ENCODE measurements at regions of chr17 and their contacts with region 1.

Region 1: DNA sequence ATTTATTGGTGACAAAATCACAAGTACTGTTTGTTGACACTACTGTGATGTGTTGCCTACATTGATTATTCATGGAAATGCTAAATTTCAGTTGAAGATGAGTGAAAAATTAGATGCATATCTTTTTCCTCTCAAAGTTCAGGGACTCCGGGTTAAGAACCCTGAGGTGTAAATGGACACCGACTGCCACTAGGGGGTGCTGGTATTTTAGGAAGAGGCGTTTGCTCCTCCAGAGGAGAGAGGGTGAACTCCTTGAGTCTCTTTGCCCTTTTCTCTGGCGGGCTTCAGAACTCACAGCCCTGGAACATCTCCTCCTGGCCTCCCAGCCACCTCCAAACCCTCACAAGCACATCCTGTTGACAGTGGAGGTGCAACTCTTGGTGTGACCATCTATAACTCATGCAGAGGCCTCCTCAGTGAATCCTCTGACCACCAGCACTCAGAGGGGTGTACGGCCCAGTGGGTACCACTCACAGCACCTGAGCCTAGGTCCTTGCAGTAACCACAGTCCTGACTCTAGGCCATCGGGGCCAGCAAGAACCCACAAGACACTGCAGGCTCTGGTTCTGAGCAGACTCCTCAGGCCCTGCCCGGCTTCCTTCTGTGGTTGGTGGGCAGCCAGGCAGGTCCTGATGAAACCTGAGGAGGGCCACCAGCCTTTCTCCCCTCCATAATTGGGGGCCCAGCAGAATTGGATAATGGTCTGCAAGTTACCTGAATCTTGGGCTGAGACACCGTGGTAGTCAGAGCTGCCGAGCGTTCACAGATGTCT is 26.2 kb upstream of the PIK3R5 start:
- DNase-seq: peak in 2 of 4 donors; percentile 60 to 69
- ATAC-seq: peak; percentile 84
- H3K4me3 ChIP-seq: no peak overlapping the region
- H3K27ac ChIP-seq: no peak overlapping the region
- H3K4me1 ChIP-seq: no peaks in the 10 kb centered on the region
- H3K27me3 ChIP-seq: peaks cover 0 to 10% of the 10 kb centered on the region in 2 donors
- CTCF ChIP-seq: peak; percentile 74 to 82

Region 2: GRCh38 chr17:9044772-9045470 is 53.2 kb after region 1 on chr17:
- intact Hi-C with region 1: no loop called
- DNase-seq: no peak
- ATAC-seq: no peak
- H3K4me3 ChIP-seq: no peak overlapping the region
- H3K27ac ChIP-seq: no peak overlapping the region
- H3K4me1 ChIP-seq: no peaks in the 10 kb centered on the region
- H3K27me3 ChIP-seq: no peaks in the 10 kb centered on the region
- CTCF ChIP-seq: no peak

Region 3: DNA sequence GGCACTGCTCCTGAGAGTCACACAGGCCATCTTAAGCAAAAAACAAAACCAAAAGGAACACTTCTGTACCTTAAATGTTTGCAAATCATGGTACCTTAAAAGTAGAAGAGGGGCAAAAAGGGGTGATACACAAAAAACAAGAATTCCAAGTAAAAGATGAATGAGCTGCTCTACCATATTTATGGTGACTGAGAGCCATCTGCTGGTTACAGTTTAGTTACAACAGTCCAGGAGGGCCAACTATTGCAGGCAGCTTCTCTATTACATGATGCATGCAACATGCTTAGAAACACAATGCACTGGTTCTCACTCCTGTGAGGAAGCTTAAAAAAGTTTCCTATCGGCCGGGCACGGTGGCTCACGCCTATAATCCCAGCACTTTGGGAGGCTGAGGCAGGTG is 530.4 kb after region 1 on chr17:
- intact Hi-C with region 1: loop called in 1 of 2 experiments (anchors 5 kb)
- DNase-seq: peak in 2 of 4 donors; percentile 33 to 43
- ATAC-seq: peak; percentile 68
- H3K4me3 ChIP-seq: no peak overlapping the region
- H3K27ac ChIP-seq: no peak overlapping the region
- H3K4me1 ChIP-seq: no peaks in the 10 kb centered on the region
- H3K27me3 ChIP-seq: no peaks in the 10 kb centered on the region
- CTCF ChIP-seq: peak in 1 of 2 donors; percentile 27